ENCODE measurements at regions of chr12 and their contacts with region 1.

Region 1: DNA sequence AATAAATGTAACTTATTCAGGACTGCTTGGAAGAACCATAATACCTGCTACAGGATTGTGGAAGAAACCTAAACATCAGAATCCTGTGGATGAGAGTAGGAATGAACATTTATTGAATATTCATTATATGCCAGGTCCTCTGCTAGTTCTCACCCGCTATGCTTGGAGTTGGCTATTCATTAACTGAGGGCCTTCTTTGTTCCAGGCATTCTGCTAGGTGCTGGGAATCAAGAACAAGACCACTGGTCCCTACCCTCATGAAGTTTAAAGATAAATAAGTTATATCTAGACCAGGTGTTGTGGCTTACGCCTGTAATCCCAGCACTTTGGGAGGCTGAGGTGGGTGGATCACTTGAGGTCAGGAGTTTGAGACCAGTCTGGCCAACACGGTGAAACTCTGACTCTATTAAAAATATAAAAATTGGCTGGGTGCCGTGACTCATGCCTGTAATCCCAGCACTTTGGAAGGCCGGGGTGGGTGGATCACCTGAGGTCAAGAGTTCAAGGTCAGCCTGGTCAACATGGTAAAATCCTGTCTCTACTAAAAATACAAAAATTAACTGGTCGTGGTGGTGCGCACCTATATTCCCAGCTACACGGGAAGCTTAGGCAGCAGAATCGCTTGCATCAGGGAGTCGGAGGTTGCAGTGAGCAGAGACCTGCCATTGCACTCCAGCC is 3.8 kb upstream of the TULP3 start:
- DNase-seq: no peak
- ATAC-seq: no peak
- H3K4me3 ChIP-seq: no peak overlapping the region
- H3K27ac ChIP-seq: no peak overlapping the region
- H3K4me1 ChIP-seq: 0 out of 2 replicates have a peak, but pooled peaks cover 2% of the 10 kb centered on the region
- H3K27me3 ChIP-seq: no peaks in the 10 kb centered on the region
- CTCF ChIP-seq: no peak
- POLR2A ChIP-seq: no peak
- RAD21 ChIP-seq: no peak

Region 2: DNA sequence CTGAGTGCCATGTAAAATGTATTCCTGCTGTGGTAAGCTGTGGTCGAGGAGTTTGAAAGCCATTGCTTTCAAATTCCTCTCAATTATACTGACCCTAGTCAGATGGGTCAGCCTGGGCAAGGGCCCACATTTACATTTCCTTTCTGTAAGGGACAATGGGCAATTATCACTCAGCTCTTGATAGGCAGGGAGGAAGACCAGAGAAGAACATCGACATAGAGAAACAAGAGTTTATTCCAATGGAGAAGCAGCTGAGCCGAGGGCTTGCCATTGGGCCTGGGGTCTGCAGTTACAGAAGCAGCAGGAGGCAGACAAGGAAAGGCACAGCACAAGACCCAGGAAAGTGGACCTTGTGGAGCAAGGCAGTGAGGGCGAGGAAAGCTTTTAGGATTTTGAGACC is 61.8 kb before region 1 on chr12:
- CTCF ChIA-PET with region 1: no interaction called
- POLR2A ChIA-PET with region 1: no interaction called
- dilution Hi-C with region 1: no loop called
- in situ Hi-C with region 1: no loop called
- intact Hi-C with region 1: no loop called
- DNase-seq: no peak
- ATAC-seq: no peak
- H3K4me3 ChIP-seq: no peak overlapping the region
- H3K27ac ChIP-seq: no peak overlapping the region
- H3K4me1 ChIP-seq: no peaks in the 10 kb centered on the region
- H3K27me3 ChIP-seq: no peaks in the 10 kb centered on the region
- CTCF ChIP-seq: no peak
- POLR2A ChIP-seq: no peak
- RAD21 ChIP-seq: no peak

Region 3: DNA sequence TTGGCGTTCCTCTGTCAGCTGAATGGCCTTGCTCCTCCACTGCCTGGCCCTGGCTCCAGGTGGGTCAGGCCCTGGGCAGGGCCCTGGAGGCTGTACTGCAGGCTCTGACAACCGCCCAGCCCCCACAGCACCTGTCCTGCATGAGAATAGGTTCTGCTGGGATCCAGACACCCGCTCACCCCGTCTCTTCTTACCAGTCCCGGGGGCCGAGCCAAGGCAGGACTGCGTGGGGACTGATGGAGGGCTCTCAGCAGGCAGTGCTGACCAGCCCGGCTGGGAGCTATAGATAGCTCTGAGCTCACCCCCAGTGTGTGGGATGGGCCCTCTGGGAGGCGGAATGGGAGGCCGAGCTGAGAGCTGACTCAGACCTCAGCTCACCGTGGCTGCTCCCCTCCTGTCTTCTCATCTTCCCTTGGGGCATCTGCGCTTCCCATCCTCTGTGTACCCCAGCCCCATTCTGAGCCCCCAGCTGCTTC is 111.9 kb after region 1 on chr12:
- CTCF ChIA-PET with region 1: no interaction called
- POLR2A ChIA-PET with region 1: no interaction called
- dilution Hi-C with region 1: no loop called
- in situ Hi-C with region 1: no loop called
- intact Hi-C with region 1: no loop called
- DNase-seq: peak; percentile 88
- ATAC-seq: peak; percentile 99
- H3K4me3 ChIP-seq: no peak overlapping the region
- H3K27ac ChIP-seq: no peak overlapping the region
- H3K4me1 ChIP-seq: peaks cover 7% of the 10 kb centered on the region
- H3K27me3 ChIP-seq: no peaks in the 10 kb centered on the region
- CTCF ChIP-seq: no peak
- POLR2A ChIP-seq: no peak
- RAD21 ChIP-seq: no peak

Region 4: DNA sequence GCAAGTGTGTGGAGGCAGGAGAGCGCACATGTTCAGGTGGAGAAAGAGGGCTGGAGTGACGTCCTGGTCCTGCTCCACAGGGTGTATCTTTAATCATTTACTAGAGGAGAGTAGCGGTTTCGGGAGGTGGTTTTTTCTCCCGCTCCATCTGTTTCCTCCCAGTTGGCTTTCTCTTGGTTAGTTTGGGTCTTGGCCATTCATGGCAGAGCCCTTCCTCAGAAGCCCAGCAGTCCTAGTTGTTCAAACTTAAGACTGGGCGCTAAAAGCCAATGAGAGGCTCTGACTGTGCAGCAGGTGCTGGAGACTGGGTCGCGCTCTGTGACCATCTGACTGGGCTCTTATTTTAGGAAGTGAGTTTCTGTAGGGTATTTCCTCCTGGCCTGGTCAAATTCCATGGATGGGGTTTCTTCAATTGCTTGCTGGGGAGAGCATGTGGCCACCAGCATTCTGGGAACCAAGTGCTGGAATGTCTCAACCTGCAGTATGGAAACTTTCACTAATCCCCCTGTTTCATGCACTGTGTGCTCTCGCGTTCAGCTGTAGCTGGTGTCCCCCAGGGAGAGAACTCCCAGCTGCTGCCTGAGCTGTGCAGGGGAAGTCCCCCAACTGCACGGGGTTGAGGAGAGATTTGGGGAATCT is 162.8 kb after region 1 on chr12:
- CTCF ChIA-PET with region 1: no interaction called
- POLR2A ChIA-PET with region 1: interaction called, 10 read pairs
- dilution Hi-C with region 1: no loop called
- in situ Hi-C with region 1: no loop called
- intact Hi-C with region 1: no loop called
- DNase-seq: no peak
- ATAC-seq: peak; percentile 12; the same call in 1 of the 2 replicates
- H3K4me3 ChIP-seq: no peak overlapping the region
- H3K27ac ChIP-seq: no peak overlapping the region
- H3K4me1 ChIP-seq: no peaks in the 10 kb centered on the region
- H3K27me3 ChIP-seq: peaks cover 13% of the 10 kb centered on the region; the same call in 1 of the 2 replicates
- CTCF ChIP-seq: no peak
- POLR2A ChIP-seq: no peak
- RAD21 ChIP-seq: no peak

Region 5: GRCh38 chr12:3200032-3200617 is 313.2 kb after region 1 on chr12:
- CTCF ChIA-PET with region 1: no interaction called
- POLR2A ChIA-PET with region 1: no interaction called
- dilution Hi-C with region 1: no loop called
- in situ Hi-C with region 1: no loop called
- intact Hi-C with region 1: no loop called
- DNase-seq: peak; percentile 65
- ATAC-seq: peak; percentile 81
- H3K4me3 ChIP-seq: peak overlapping the region; percentile 51
- H3K27ac ChIP-seq: no peak overlapping the region
- H3K4me1 ChIP-seq: peaks cover 3% of the 10 kb centered on the region; the same call in 1 of the 2 replicates
- H3K27me3 ChIP-seq: peaks cover 6% of the 10 kb centered on the region
- CTCF ChIP-seq: no peak
- POLR2A ChIP-seq: peak; percentile 70
- RAD21 ChIP-seq: no peak